IMR-90 (cell line): ENCODE measurements at regions of chr4 and their contacts with region 1.

Region 1: DNA sequence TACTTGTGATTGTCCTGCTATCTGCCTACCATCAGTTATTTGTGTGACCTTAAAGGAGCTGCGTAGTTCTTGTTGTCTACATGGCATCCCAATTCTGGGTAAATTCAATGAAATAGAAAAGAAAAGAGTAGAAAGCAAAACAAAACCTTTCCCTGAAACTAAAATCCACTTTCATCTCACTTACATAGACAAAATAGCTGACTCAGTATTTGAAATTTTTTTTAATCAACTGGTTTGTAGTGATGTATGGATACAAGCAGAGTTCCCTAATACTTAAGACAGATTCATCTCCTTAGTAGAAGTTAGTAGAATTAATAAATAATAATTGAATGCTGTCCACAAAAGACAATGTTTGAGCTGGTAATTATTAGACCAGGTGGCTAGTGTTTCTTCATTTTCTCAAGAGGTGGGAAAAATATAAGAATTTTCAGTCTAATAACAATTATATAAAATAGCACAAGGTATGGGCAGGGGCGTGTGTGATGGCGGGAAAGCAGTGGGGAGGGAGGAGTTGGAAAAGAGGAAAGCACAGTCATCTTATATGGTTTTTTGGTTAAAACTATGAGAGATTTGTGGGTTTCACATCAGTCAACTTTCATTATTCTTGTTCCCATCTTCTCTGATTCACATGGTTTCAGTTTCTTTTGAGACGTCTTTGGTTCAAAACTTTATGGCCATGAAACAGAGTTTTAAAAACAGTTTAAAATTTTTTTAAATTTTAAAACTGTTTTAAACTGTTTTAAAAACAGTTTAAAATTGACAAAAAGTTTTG is 275.2 kb downstream of the SPRY1 start:
- DNase-seq: no peak
- ATAC-seq: no peak
- H3K4me3 ChIP-seq: no peak overlapping the region
- H3K27ac ChIP-seq: no peak overlapping the region
- H3K4me1 ChIP-seq: peaks cover 4% of the 10 kb centered on the region; the same call in 1 of the 2 replicates
- H3K27me3 ChIP-seq: no peaks in the 10 kb centered on the region
- CTCF ChIP-seq: no peak
- POLR2A ChIP-seq: no peak
- RAD21 ChIP-seq: no peak

Region 2: GRCh38 chr4:123299212-123299691 is 372.6 kb before region 1 on chr4:
- CTCF ChIA-PET with region 1: no interaction called
- POLR2A ChIA-PET with region 1: no interaction called
- dilution Hi-C with region 1: no loop called
- in situ Hi-C with region 1: no loop called
- intact Hi-C with region 1: no loop called
- DNase-seq: peak; percentile 84
- ATAC-seq: peak; percentile 79
- H3K4me3 ChIP-seq: no peak overlapping the region
- H3K27ac ChIP-seq: peak overlapping the region; percentile 64; the same call in 1 of the 2 replicates
- H3K4me1 ChIP-seq: peaks cover 4% of the 10 kb centered on the region; the same call in 1 of the 2 replicates
- H3K27me3 ChIP-seq: no peaks in the 10 kb centered on the region
- CTCF ChIP-seq: no peak
- POLR2A ChIP-seq: no peak
- RAD21 ChIP-seq: no peak

Region 3: GRCh38 chr4:123682931-123683330 is 11.1 kb after region 1 on chr4:
- CTCF ChIA-PET with region 1: no interaction called
- POLR2A ChIA-PET with region 1: no interaction called
- dilution Hi-C with region 1: no loop called
- in situ Hi-C with region 1: no loop called
- intact Hi-C with region 1: no loop called
- DNase-seq: no peak
- ATAC-seq: no peak
- H3K4me3 ChIP-seq: no peak overlapping the region
- H3K27ac ChIP-seq: no peak overlapping the region
- H3K4me1 ChIP-seq: no peaks in the 10 kb centered on the region
- H3K27me3 ChIP-seq: no peaks in the 10 kb centered on the region
- CTCF ChIP-seq: no peak
- POLR2A ChIP-seq: no peak
- RAD21 ChIP-seq: no peak

Region 4: DNA sequence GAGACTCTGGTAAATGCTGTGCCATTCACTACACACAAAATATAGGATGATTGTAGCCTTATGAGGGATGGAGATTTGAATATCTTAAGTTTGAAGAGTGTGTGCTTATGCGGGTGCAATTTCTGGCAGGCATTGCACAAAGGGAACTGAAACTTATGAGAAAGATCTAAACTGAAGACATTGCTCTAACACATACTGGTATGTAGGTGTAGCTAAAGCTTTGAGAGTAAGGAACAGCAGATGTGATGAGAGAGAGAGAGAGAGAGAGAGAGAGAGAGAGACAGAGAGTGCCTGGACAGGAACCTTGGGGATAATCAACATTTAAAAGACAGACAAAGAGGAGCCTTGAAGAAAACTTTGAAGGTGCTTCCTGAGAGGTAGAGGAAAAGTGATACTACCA is 104.4 kb after region 1 on chr4:
- CTCF ChIA-PET with region 1: no interaction called
- POLR2A ChIA-PET with region 1: no interaction called
- dilution Hi-C with region 1: no loop called
- in situ Hi-C with region 1: no loop called
- intact Hi-C with region 1: loop called (anchors 1 kb)
- DNase-seq: no peak
- ATAC-seq: no peak
- H3K4me3 ChIP-seq: no peak overlapping the region
- H3K27ac ChIP-seq: no peak overlapping the region
- H3K4me1 ChIP-seq: peaks cover 4% of the 10 kb centered on the region; the same call in 1 of the 2 replicates
- H3K27me3 ChIP-seq: no peaks in the 10 kb centered on the region
- CTCF ChIP-seq: no peak
- POLR2A ChIP-seq: no peak
- RAD21 ChIP-seq: no peak

Region 5: GRCh38 chr4:123848606-123849005 is 176.8 kb after region 1 on chr4:
- CTCF ChIA-PET with region 1: no interaction called
- POLR2A ChIA-PET with region 1: no interaction called
- dilution Hi-C with region 1: no loop called
- in situ Hi-C with region 1: no loop called
- intact Hi-C with region 1: no loop called
- DNase-seq: no peak
- ATAC-seq: no peak
- H3K4me3 ChIP-seq: no peak overlapping the region
- H3K27ac ChIP-seq: no peak overlapping the region
- H3K4me1 ChIP-seq: no peaks in the 10 kb centered on the region
- H3K27me3 ChIP-seq: no peaks in the 10 kb centered on the region
- CTCF ChIP-seq: no peak
- POLR2A ChIP-seq: no peak
- RAD21 ChIP-seq: no peak